Mammary epithelial cell (primary cell): ENCODE measurements at regions of chr19 and their contacts with region 1.

Region 1: GRCh38 chr19:7718668-7719067 is 13.2 kb downstream of the CLEC4G start:
- DNase-seq: no peak
- H3K4me3 ChIP-seq: no peak overlapping the region
- H3K27ac ChIP-seq: no peak overlapping the region
- H3K4me1 ChIP-seq: no peaks in the 10 kb centered on the region
- H3K27me3 ChIP-seq: no peaks in the 10 kb centered on the region
- CTCF ChIP-seq: no peak

Region 2: GRCh38 chr19:7267792-7268704 is 450.6 kb before region 1 on chr19:
- CTCF ChIA-PET with region 1: no interaction called
- dilution Hi-C with region 1: loop called (anchors 10 kb)
- in situ Hi-C with region 1: no loop called
- intact Hi-C with region 1: no loop called
- DNase-seq: no peak
- H3K4me3 ChIP-seq: no peak overlapping the region
- H3K27ac ChIP-seq: no peak overlapping the region
- H3K4me1 ChIP-seq: no peaks in the 10 kb centered on the region
- H3K27me3 ChIP-seq: no peaks in the 10 kb centered on the region
- CTCF ChIP-seq: no peak